ENCODE measurements at regions of chr15 and their contacts with region 1.

Region 1: DNA sequence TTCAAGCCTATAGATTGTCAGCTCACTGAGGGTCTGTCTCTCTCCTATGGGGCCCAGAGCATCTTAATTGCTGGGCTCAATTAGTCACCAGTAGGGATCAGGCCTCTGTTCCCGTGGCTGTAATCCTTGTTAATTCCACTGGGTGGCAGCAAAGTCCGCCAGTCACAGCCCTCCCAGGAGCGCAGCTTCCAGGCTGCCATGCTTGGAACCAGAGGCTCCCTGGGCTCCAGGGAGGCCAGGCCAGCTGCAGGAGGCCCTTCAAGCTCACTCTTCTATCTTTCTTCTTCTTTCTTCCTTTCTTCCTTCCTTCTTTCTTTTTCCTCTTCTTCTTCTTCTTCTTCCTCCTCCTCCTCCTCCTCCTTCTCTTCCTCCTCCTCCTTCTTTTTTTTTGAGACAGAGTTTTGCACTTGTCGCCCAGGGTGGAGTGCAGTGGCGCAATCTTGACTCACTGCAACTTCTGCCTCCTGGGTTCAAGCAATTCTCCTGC is 14.4 kb downstream of the RNU5B-1 start:
- DNase-seq: peak; percentile 81
- H3K4me3 ChIP-seq: no peak overlapping the region
- H3K27ac ChIP-seq: no peak overlapping the region
- H3K4me1 ChIP-seq: no peaks in the 10 kb centered on the region
- H3K27me3 ChIP-seq: no peaks in the 10 kb centered on the region
- CTCF ChIP-seq: peak; percentile 90

Region 2: GRCh38 chr15:65384895-65385858 is 66.3 kb after region 1 on chr15:
- intact Hi-C with region 1: loop called (anchors 1 kb)
- DNase-seq: peak; percentile 90
- H3K4me3 ChIP-seq: peak overlapping the region; percentile 33
- H3K27ac ChIP-seq: no peak overlapping the region
- H3K4me1 ChIP-seq: peaks cover 8% of the 10 kb centered on the region
- H3K27me3 ChIP-seq: no peaks in the 10 kb centered on the region
- CTCF ChIP-seq: peak; percentile 74

Region 3: GRCh38 chr15:65638681-65639089 is 319.8 kb after region 1 on chr15:
- intact Hi-C with region 1: no loop called
- DNase-seq: peak; percentile 54
- H3K4me3 ChIP-seq: no peak overlapping the region
- H3K27ac ChIP-seq: no peak overlapping the region
- H3K4me1 ChIP-seq: no peaks in the 10 kb centered on the region
- H3K27me3 ChIP-seq: no peaks in the 10 kb centered on the region
- CTCF ChIP-seq: peak; percentile 70